ENCODE measurements at regions of chr15 and their contacts with region 1.

Region 1: GRCh38 chr15:90154861-90155626 is 46.1 kb upstream of the SEMA4B start:
- DNase-seq: peak; percentile 95
- ATAC-seq: peak; percentile 72
- H3K4me3 ChIP-seq: no peak overlapping the region
- H3K27ac ChIP-seq: peak overlapping the region; percentile 18; the same call in 1 of the 2 replicates
- H3K4me1 ChIP-seq: peaks cover 16% of the 10 kb centered on the region
- H3K27me3 ChIP-seq: no peaks in the 10 kb centered on the region
- CTCF ChIP-seq: no peak
- POLR2A ChIP-seq: no peak
- RAD21 ChIP-seq: no peak

Region 2: GRCh38 chr15:90101969-90102890 is 52.8 kb before region 1 on chr15 and contains the start of gene IDH2:
- CTCF ChIA-PET with region 1: no interaction called
- POLR2A ChIA-PET with region 1: interaction called, 4 read pairs
- dilution Hi-C with region 1: no loop called
- in situ Hi-C with region 1: no loop called
- intact Hi-C with region 1: loop called (anchors 2 kb)
- DNase-seq: peak; percentile 79
- ATAC-seq: peak; percentile 90
- H3K4me3 ChIP-seq: peak within 1 kb of the TSS; percentile 93
- H3K27ac ChIP-seq: peak within 1 kb of the TSS; percentile 58
- H3K4me1 ChIP-seq: peaks cover 31% of the 10 kb centered on the region
- H3K27me3 ChIP-seq: no peaks in the 10 kb centered on the region
- CTCF ChIP-seq: no peak
- POLR2A ChIP-seq: peak; percentile 93
- RAD21 ChIP-seq: no peak
- total RNA-seq, gene IDH2: 87.2 and 118 TPM in 2 replicates

Region 3: DNA sequence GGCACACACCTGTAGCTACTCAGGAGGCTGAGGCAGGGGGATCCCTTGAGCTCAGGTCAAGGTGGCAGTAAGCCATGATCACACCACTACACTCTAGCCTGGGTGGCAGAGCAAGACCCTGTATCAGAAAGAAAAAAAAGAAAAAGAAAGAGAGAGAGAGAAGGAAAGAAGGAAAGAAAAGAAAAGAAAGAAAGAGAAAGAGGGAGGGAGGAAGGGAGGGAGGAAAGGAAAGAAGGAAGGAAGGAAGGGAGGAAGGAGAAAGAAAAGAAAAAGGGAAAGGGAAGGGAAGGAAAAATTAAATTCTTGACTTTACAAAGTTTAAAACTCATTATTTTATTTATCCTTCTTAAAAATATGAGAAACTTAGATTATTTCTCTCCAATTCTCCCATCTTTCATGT is 35.7 kb before region 1 on chr15:
- CTCF ChIA-PET with region 1: no interaction called
- POLR2A ChIA-PET with region 1: no interaction called
- dilution Hi-C with region 1: no loop called
- in situ Hi-C with region 1: no loop called
- intact Hi-C with region 1: loop called (anchors 5 kb)
- DNase-seq: no peak
- ATAC-seq: no peak
- H3K4me3 ChIP-seq: no peak overlapping the region
- H3K27ac ChIP-seq: no peak overlapping the region
- H3K4me1 ChIP-seq: no peaks in the 10 kb centered on the region
- H3K27me3 ChIP-seq: peaks cover 8% of the 10 kb centered on the region
- CTCF ChIP-seq: no peak
- POLR2A ChIP-seq: no peak
- RAD21 ChIP-seq: no peak

Region 4: DNA sequence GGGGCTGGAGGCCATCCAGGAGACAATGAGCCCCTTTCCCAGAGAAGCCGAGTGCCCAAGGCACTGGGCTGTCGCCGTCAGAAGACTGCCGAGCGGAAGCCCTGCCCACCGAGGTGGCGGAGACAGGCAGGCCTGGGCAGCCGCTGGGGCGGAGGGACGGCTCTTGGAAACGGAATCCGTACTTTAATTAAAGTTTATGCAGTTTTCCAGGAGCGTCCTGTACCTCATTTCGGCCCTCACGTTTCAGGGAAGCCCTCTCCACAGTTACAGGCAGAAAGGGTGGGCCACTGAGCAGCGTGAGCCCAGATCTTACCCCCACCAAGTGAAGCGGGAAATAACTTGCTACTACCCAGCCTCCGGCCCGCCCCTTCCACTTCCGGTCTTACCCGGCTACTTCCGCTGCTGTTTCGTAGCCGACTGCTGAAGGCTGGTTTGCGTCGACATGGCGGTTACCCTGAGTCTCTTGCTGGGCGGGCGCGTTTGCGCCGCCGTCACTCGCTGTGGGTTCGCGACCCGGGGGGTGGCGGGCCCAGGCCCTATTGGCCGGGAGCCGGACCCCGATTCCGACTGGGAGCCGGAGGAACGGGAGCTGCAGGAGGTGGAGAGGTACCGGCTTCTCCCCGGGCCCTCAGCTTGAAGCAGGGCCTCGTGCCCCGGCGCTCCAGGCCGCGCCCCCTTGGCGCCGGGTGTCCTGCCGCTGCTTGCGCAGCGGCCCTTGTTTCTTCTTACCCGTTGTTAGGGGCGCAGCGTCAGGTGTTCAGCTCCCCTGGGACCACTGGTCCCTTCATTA is 110.4 kb after region 1 on chr15 and contains the start of gene NGRN:
- CTCF ChIA-PET with region 1: no interaction called
- POLR2A ChIA-PET with region 1: interaction called, 13 read pairs
- dilution Hi-C with region 1: no loop called
- in situ Hi-C with region 1: no loop called
- intact Hi-C with region 1: no loop called
- DNase-seq: peak; percentile 88
- ATAC-seq: peak; percentile 92
- H3K4me3 ChIP-seq: peak within 1 kb of the TSS; percentile 90
- H3K27ac ChIP-seq: peak within 1 kb of the TSS; percentile 96
- H3K4me1 ChIP-seq: peaks cover 7% of the 10 kb centered on the region
- H3K27me3 ChIP-seq: no peaks in the 10 kb centered on the region
- CTCF ChIP-seq: no peak
- POLR2A ChIP-seq: peak; percentile 82
- RAD21 ChIP-seq: no peak
- total RNA-seq, gene NGRN: 39.6 and 44.2 TPM in 2 replicates